Vagina (tissue), 2 donors: ENCODE measurements at regions of chr3 and their contacts with region 1.

Region 1: DNA sequence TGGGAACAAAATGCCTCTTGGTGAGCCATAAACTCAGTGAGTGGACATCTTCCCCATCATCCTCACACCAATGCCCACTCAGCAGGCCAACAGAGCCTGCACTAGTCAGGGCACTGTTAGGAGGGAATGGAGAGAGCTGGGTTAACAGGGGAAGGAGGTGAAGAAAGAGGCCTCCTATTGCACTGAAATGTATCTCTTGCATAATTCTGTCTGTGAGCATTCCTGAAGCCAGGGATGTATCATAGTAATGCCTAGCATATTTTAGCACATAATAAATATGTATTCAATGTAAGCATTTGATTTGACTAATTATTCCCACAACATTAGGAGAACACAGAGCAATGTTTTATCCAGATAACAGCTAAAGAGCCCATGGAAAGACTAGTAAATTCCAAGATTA is 81.2 kb downstream of the ANO10 start:
- DNase-seq: no peak
- H3K4me3 ChIP-seq: no peak overlapping the region
- H3K27ac ChIP-seq: no peak overlapping the region
- H3K4me1 ChIP-seq: no peaks in the 10 kb centered on the region
- H3K27me3 ChIP-seq: no peaks in the 10 kb centered on the region
- CTCF ChIP-seq: no peak
- POLR2A ChIP-seq: no peak

Region 2: DNA sequence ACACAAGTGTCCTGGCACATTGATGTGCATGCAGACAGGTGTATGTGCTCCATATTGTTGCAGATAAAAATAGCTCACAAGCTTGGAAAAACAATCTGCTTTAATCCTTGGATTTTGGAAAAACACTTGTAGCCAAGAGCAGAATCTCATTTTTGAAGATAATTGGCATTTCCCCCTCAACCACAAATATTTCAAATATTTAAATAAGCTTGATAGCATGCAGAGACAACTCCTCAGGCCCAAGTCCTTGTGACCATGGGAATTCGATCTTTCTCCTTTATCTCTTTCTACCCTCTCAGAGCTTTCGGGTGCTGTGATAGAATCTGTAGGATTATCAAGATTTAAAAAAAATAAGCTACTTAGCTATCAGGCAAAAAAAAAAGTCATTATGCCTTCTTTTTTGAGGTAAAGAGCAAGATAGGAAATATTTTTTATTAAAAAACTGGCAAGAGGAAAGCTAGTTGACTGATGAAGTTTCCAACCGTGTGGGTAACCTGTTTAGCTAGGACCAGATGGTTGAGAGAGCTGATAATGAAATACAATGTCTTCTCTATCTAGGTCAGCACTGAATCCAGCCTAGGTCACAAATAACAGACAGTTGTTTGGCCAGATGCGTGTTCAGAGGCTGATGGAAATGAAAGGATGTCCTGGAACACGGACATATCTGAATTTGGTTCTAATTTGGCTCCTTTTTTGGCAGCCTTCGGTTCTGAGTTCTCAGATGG is 309.2 kb before region 1 on chr3:
- intact Hi-C with region 1: no loop called
- DNase-seq: no peak
- H3K4me3 ChIP-seq: no peak overlapping the region
- H3K27ac ChIP-seq: no peak overlapping the region
- H3K4me1 ChIP-seq: peaks cover 11% of the 10 kb centered on the region
- H3K27me3 ChIP-seq: no peaks in the 10 kb centered on the region
- CTCF ChIP-seq: no peak
- POLR2A ChIP-seq: no peak

Region 3: GRCh38 chr3:44198284-44199269 is 658.0 kb after region 1 on chr3:
- intact Hi-C with region 1: loop called (anchors 10 kb)
- DNase-seq: no peak
- H3K4me3 ChIP-seq: no peak overlapping the region
- H3K27ac ChIP-seq: no peak overlapping the region
- H3K4me1 ChIP-seq: no peaks in the 10 kb centered on the region
- H3K27me3 ChIP-seq: no peaks in the 10 kb centered on the region
- CTCF ChIP-seq: peak; percentile 42 to 61 (median 55)
- POLR2A ChIP-seq: no peak

Region 4: DNA sequence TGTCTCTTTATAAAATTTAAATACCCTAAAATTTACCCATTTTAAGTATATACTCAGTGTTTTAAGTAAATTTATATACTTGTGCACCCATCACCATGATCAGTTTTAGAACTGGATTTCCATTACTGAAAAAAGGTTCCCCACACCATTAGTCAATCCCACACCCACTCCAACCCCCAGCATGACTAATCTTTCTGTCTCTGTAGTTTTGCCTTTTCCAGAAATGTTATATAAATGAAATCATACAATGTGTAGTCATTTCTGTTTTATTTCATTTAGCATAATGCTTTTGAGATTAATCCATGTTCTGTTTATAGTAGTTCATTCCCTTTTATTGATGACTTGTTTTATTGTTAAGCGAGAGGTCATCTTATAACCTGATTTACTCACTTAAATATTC is 1987.8 kb after region 1 on chr3:
- intact Hi-C with region 1: no loop called
- DNase-seq: no peak
- H3K4me3 ChIP-seq: no peak overlapping the region
- H3K27ac ChIP-seq: no peak overlapping the region
- H3K4me1 ChIP-seq: no peaks in the 10 kb centered on the region
- H3K27me3 ChIP-seq: no peaks in the 10 kb centered on the region
- CTCF ChIP-seq: no peak
- POLR2A ChIP-seq: no peak